Heart right ventricle (tissue), 16 donors: ENCODE measurements at regions of chr1 and their contacts with region 1.

Region 1: DNA sequence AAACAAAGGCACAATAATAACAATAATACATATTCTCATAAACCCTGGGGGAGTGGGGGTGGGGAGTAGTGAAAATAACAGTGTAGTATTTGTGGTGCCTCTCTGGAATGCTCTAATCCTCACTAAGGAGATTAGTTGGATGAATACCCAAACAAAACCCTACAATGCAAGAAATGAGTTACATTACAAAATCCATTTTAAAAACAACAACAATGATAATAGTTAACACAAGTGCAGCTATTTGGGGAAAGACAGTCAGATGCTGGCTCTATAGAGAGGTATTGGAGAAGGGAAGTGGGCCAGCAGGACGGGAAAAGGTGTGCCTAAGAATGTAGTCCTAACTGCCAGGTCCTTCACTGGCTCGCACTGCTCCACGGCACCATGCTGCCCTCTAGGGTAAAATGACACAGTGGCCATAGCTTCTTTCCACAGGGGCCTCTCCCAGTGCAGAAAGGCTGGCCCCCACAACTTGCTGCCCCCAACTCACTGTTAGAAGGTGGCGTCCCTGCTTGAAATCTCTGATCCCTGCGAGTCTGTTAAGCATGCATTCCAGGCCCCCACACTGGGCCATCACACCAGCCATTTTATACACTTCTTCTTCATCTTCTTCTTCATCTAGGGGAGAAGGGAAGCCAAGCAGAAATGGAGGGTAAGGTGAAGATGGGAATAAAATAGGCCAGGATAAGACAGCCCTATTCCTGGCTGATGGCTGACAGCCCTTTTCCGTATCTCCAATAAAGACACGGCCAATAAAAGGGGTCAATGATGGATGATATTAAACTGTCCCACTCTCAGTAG is 113.8 kb downstream of the UBR4 start:
- DNase-seq: peak; percentile 44 to 53
- ATAC-seq: peak in 7 of 8 donors; percentile 63 to 88 (median 85)
- H3K4me3 ChIP-seq: no peak overlapping the region
- H3K27ac ChIP-seq: peak overlapping the region in 1 of 10 donors; percentile 0
- H3K4me1 ChIP-seq: peaks cover 0 to 20% (median 4%) of the 10 kb centered on the region in 9 donors
- H3K27me3 ChIP-seq: no peaks in the 10 kb centered on the region
- CTCF ChIP-seq: peak; percentile 35 to 74 (median 62)

Region 2: DNA sequence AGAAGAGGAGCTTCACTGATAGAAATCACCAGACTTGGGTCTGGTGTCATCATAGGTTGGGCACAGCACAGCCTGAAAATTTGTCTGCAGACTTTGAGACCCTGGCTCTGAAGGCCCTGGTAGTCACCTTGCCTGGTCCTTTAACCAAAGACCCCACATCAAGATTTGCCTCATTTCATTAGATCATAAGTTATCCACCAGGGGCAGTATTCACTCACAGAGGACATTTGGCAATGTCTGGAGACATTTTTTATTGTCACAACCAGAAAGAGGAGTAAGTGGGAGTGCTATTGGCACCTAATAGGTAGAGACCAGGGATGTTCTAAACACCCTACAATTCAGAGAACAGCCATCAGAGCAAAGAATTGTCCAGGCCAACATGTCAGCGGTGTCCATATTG is 487.7 kb before region 1 on chr1:
- intact Hi-C with region 1: no loop called
- DNase-seq: no peak
- ATAC-seq: no peak
- H3K4me3 ChIP-seq: no peak overlapping the region
- H3K27ac ChIP-seq: no peak overlapping the region
- H3K4me1 ChIP-seq: no peaks in the 10 kb centered on the region
- H3K27me3 ChIP-seq: peaks cover 0 to 84% (median 61%) of the 10 kb centered on the region in 7 donors
- CTCF ChIP-seq: no peak

Region 3: GRCh38 chr1:18883636-18884418 is 212.4 kb before region 1 on chr1:
- intact Hi-C with region 1: loop called in 3 of 10 experiments (anchors 1 to 2 kb)
- DNase-seq: peak; percentile 76 to 80
- ATAC-seq: peak; percentile 46 to 80 (median 72)
- H3K4me3 ChIP-seq: no peak overlapping the region
- H3K27ac ChIP-seq: no peak overlapping the region
- H3K4me1 ChIP-seq: peaks cover 0 to 11% (median 0%) of the 10 kb centered on the region in 9 donors
- H3K27me3 ChIP-seq: no peaks in the 10 kb centered on the region
- CTCF ChIP-seq: peak; percentile 86 to 96 (median 92)

Region 4: DNA sequence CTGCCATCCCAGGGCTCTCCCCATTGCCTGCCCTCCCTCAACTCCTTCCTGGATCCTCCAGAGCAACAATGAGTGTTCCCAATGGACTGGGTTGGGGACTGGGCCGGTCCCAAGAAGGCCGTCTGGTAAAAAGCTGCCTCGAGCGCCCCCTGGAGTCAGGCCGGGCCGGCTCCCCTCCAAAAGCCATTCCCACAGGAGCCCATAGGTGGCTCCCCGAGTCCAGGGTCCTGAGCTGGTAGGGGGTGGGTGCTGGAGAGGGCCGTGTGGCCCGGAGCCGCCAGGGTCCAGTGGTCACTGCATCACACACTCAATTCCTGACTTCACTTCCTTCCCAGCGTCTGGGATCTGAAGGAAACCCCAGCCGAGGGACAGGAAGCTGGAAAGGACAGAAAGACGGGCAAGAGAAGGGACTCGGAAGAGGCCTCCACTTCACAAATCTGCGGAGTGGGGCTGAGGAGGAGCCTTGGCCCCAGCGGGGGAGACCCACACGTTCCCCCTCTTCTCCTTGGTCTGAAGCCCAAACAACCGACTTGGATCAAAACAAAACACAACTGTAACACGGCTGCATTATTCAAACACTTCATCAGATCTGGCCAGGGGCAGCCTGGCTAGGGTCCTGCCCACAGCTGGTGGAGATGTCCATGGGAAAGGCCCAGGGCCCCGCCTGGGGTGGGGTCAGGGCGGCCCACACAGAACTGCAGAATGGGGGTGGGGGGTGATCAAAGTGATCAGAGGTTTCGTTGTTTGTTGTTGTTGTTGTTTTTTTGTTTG is 183.0 kb before region 1 on chr1:
- intact Hi-C with region 1: loop called in 8 of 10 experiments (anchors 5 kb)
- DNase-seq: peak; percentile 85 to 89
- ATAC-seq: peak; percentile 86 to 95 (median 90)
- H3K4me3 ChIP-seq: no peak overlapping the region
- H3K27ac ChIP-seq: peak overlapping the region; percentile 18 to 86 (median 76)
- H3K4me1 ChIP-seq: peaks cover 4 to 45% (median 31%) of the 10 kb centered on the region in 9 donors
- H3K27me3 ChIP-seq: no peaks in the 10 kb centered on the region
- CTCF ChIP-seq: peak; percentile 93 to 100 (median 98)

Region 5: GRCh38 chr1:18972531-18972930 is 123.7 kb before region 1 on chr1:
- intact Hi-C with region 1: loop called in 1 of 10 experiments (anchors 10 kb)
- DNase-seq: no peak
- ATAC-seq: peak in 3 of 8 donors; percentile 37 to 53 (median 42)
- H3K4me3 ChIP-seq: no peak overlapping the region
- H3K27ac ChIP-seq: no peak overlapping the region
- H3K4me1 ChIP-seq: peaks cover 0 to 14% (median 4%) of the 10 kb centered on the region in 9 donors
- H3K27me3 ChIP-seq: peaks cover 0 to 9% (median 0%) of the 10 kb centered on the region in 7 donors
- CTCF ChIP-seq: peak in 8 of 9 donors; percentile 10 to 65 (median 42)

Region 6: GRCh38 chr1:19010995-19011844 is 85.0 kb before region 1 on chr1:
- intact Hi-C with region 1: loop called in 2 of 10 experiments (anchors 5 to 10 kb)
- DNase-seq: peak in 1 of 2 donors; percentile 35
- ATAC-seq: peak in 7 of 8 donors; percentile 27 to 84 (median 49)
- H3K4me3 ChIP-seq: no peak overlapping the region
- H3K27ac ChIP-seq: peak overlapping the region in 1 of 10 donors; percentile 42
- H3K4me1 ChIP-seq: peaks cover 0 to 23% (median 6%) of the 10 kb centered on the region in 9 donors
- H3K27me3 ChIP-seq: peaks cover 0 to 20% (median 5%) of the 10 kb centered on the region in 7 donors
- CTCF ChIP-seq: no peak